ENCODE measurements at regions of chr7 and their contacts with region 1.

Region 1: GRCh38 chr7:130205084-130205947 is at the start of gene TMEM209:
- ATAC-seq: peak; percentile 89 to 98 (median 96)
- H3K4me3 ChIP-seq: peak within 1 kb of the TSS; percentile 54 to 86 (median 81)
- H3K27ac ChIP-seq: peak within 1 kb of the TSS; percentile 74 to 94
- H3K4me1 ChIP-seq: peaks cover 17% of the 10 kb centered on the region in 2 donors
- total RNA-seq, gene TMEM209: 18.4 to 30.0 (median 22.6) TPM

Region 2: GRCh38 chr7:130440527-130441365 is 235.4 kb after region 1 on chr7 and contains the start of gene CEP41:
- in situ Hi-C with region 1: loop called in 1 of 9 experiments (anchors 25 kb)
- ATAC-seq: peak; percentile 94 to 99 (median 97)
- H3K4me3 ChIP-seq: peak within 1 kb of the TSS; percentile 52 to 98 (median 67)
- H3K27ac ChIP-seq: peak within 1 kb of the TSS; percentile 94 to 99
- H3K4me1 ChIP-seq: peaks cover 18 to 21% of the 10 kb centered on the region in 2 donors
- total RNA-seq, gene CEP41: 7.0 to 22.6 (median 17.9) TPM

Region 3: GRCh38 chr7:130486114-130486958 is 281.0 kb after region 1 on chr7:
- in situ Hi-C with region 1: loop called in 1 of 9 experiments (anchors 25 kb)
- ATAC-seq: peak in 1 of 8 experiments; percentile 8
- H3K4me3 ChIP-seq: peak overlapping the region in 1 of 5 donors; percentile 4
- H3K27ac ChIP-seq: peak overlapping the region in 1 of 2 donors; percentile 18
- H3K4me1 ChIP-seq: peaks cover 8 to 28% of the 10 kb centered on the region in 2 donors

Region 4: DNA sequence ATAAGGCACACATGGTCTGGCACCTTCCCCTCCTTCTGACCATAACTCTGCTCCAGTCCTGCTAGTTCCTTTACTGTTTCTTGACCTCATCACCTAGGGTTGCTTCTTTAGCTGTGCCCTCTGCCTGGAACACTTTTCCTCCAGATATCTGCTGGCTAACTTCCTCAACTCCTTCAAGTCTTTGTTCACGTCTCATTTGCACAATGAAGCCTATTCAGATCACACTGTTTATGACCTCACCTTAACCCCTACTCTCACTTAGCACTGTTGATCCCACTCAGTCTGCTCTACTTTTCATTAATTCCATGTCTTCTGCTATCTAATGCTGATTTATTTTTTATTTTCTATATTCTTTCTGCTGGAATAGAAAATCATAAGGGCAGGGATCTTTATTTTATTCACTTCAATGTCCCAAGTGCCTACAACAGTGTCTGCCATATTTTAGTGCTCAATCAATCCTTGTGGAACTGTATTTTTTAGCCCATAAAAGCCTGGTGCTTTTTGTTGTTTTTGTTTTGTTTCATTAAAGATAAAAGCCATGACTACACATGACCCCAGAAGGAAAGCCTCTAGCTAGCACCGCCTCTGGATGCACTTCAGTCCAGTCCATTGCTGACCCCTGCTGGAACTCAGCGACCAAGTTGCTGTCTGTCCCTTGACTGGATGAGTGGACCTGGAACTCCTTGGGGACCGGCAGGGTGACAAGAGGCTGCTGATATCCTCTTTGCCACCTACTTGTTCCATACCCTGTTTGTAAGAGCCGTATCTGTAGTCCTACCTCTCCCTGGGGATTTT is 516.4 kb after region 1 on chr7:
- in situ Hi-C with region 1: loop called in 1 of 9 experiments (anchors 25 kb)
- ATAC-seq: peak; percentile 84 to 100 (median 96)
- H3K4me3 ChIP-seq: no peak overlapping the region
- H3K27ac ChIP-seq: no peak overlapping the region
- H3K4me1 ChIP-seq: peaks cover 0 to 7% of the 10 kb centered on the region in 2 donors